ENCODE measurements at regions of chr7 and their contacts with region 1.

Region 1: GRCh38 chr7:130069978-130070860 is at the start of gene KLHDC10:
- DNase-seq: peak; percentile 99
- H3K4me3 ChIP-seq: peak within 1 kb of the TSS; percentile 65 to 99 (median 88)
- H3K27ac ChIP-seq: peak within 1 kb of the TSS; percentile 74 to 92
- H3K4me1 ChIP-seq: peaks cover 5 to 23% (median 15%) of the 10 kb centered on the region in 4 experiments
- H3K27me3 ChIP-seq: no peaks in the 10 kb centered on the region

Region 2: GRCh38 chr7:130084037-130084875 is 14.0 kb after region 1 on chr7:
- CTCF ChIA-PET with region 1: interaction called, 14 read pairs
- POLR2A ChIA-PET with region 1: interaction called, 6 read pairs
- DNase-seq: peak in 2 of 3 donors; percentile 35 to 37
- H3K4me3 ChIP-seq: no peak overlapping the region
- H3K27ac ChIP-seq: no peak overlapping the region
- H3K4me1 ChIP-seq: no peaks in the 10 kb centered on the region
- H3K27me3 ChIP-seq: no peaks in the 10 kb centered on the region

Region 3: DNA sequence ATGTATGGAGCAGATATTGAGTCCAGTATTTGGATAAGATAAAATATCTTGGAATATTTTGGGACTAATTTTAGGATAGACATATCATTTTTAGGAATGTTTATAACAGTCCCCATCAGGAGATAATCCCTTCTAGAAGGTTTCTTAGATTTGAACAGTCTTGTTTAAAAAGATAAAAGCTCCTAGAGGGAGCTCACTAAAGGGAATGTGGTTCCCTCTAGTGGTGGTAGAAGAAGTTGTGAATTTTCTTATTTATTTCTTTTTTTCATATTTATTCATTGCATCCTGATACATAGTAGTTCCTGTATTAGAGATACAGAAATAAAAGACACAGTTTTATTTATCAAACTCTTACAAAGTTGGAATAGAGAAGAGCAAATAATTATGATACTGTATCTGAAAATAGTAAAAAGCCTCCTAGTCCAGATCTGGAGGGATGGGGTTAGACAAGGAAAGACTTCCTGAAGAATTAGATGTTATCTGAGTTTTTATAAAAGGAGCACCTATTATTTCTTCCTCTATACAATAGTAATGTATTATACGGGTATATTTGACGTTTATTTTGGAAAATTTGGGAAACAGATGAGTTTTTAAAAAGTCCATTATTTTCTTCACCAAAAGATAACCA is 688.3 kb after region 1 on chr7:
- CTCF ChIA-PET with region 1: interaction called, 15 read pairs
- POLR2A ChIA-PET with region 1: no interaction called
- DNase-seq: peak; percentile 70 to 87 (median 81)
- H3K4me3 ChIP-seq: no peak overlapping the region
- H3K27ac ChIP-seq: no peak overlapping the region
- H3K4me1 ChIP-seq: no peaks in the 10 kb centered on the region
- H3K27me3 ChIP-seq: no peaks in the 10 kb centered on the region

Measured in common myeloid progenitor, CD34-positive (primary cell).